Activated CD8-positive, alpha-beta T cell treated with anti-CD3 and anti-CD28 coated beads for 36 hours (primary cell): ENCODE measurements at regions of chr1 and their contacts with region 1.

Region 1: DNA sequence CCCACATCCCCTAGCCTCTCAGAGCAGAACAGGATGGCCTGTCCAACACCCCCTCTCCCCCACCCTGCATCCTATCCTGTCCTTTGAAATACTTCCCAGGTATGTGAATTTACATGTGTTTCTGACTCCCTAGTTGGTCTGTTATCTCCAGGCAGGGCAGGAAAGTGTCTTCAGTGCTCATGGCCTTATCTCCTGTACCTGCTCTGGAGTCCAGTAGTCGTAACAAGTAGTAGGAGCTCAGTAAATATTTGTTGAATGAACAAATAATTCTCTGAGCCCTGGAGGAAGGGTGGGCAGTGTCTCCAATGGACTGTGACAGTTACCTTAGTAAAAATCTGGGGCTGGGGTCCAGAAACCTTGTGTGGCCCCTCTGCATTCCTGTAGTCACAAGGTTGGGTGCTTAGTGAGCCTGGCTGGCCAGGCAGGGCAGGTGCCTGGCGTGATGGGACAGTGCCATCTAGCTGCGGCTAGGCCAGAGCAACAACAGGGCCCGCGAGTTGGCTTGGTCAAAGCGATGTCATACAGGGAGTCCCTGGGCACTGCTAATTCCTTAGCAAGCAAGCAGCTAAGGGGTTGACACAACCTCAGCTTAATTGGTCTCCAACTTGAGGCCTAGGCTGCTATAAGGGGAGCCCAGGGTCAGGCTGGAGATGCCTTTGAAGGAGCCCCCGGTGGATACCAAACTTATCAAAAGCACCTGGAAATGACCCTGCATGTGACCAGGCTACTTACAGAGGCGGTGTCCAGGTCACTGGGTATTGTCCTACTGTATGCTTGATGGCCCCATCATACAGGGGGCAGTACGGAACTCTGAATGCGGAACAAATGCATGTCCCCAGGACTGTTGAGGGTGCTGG is 89.0 kb upstream of the PPM1J start:
- DNase-seq: peak; percentile 72
- ATAC-seq: peak; percentile 95
- H3K4me3 Mint-ChIP-seq: no peak overlapping the region
- H3K27ac Mint-ChIP-seq: no peak overlapping the region
- H3K4me1 Mint-ChIP-seq: no peaks in the 10 kb centered on the region
- H3K27me3 Mint-ChIP-seq: peaks cover 5% of the 10 kb centered on the region
- CTCF ChIP-seq: peak; percentile 65

Region 2: DNA sequence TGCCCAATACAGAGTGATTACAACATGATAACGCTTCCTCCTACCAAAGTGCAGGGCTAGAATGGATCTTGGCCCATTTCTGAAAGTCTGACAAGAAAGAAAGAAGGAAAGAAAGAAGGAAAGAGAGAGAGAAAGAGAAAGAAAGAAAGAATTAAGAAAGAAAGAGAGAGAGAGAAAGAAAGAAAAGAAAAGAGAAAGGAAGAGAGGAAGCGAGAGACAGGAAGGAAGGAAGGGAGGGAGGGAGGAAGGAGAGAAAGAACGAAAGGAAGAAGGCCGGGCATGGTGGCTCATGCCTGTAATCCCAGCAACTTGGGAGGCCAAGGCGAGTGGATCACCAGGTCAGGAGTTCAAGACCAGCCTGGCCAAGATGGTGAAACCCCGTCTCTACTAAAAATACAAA is 44.9 kb before region 1 on chr1:
- CTCF ChIA-PET with region 1: interaction called, 3 read pairs
- POLR2A ChIA-PET with region 1: no interaction called
- intact Hi-C with region 1: loop called (anchors 5 kb)
- DNase-seq: no peak
- ATAC-seq: no peak
- H3K4me3 Mint-ChIP-seq: no peak overlapping the region
- H3K27ac Mint-ChIP-seq: no peak overlapping the region
- H3K4me1 Mint-ChIP-seq: no peaks in the 10 kb centered on the region
- H3K27me3 Mint-ChIP-seq: peaks cover 10% of the 10 kb centered on the region
- CTCF ChIP-seq: no peak

Region 3: GRCh38 chr1:112778137-112778536 is 26.0 kb before region 1 on chr1:
- CTCF ChIA-PET with region 1: no interaction called
- POLR2A ChIA-PET with region 1: no interaction called
- intact Hi-C with region 1: no loop called
- DNase-seq: no peak
- ATAC-seq: no peak
- H3K4me3 Mint-ChIP-seq: no peak overlapping the region
- H3K27ac Mint-ChIP-seq: no peak overlapping the region
- H3K4me1 Mint-ChIP-seq: no peaks in the 10 kb centered on the region
- H3K27me3 Mint-ChIP-seq: peaks cover 1% of the 10 kb centered on the region
- CTCF ChIP-seq: no peak